CD14-positive monocyte (primary cell): ENCODE measurements at regions of chr4 and their contacts with region 1.

Region 1: GRCh38 chr4:139815778-139816601 is 150.4 kb downstream of the MGST2 start:
- DNase-seq: peak; percentile 75 to 90 (median 88)
- H3K4me3 ChIP-seq: peak overlapping the region; percentile 29 to 70 (median 44)
- H3K4me3 Mint-ChIP-seq: peak overlapping the region; percentile 84 to 93
- H3K27ac ChIP-seq: peak overlapping the region; percentile 26 to 68
- H3K27ac Mint-ChIP-seq: peak overlapping the region; percentile 75 to 97 (median 93)
- H3K4me1 ChIP-seq: peaks cover 44 to 48% of the 10 kb centered on the region in 2 donors
- H3K4me1 Mint-ChIP-seq: peaks cover 64% of the 10 kb centered on the region
- H3K27me3 ChIP-seq: no peaks in the 10 kb centered on the region
- H3K27me3 Mint-ChIP-seq: no peaks in the 10 kb centered on the region
- CTCF ChIP-seq: no peak

Region 2: GRCh38 chr4:139734875-139735380 is 81.1 kb before region 1 on chr4:
- intact Hi-C with region 1: loop called in 1 of 2 experiments (anchors 5 kb)
- DNase-seq: peak; percentile 74 to 97 (median 78)
- H3K4me3 ChIP-seq: peak overlapping the region; percentile 53 to 81 (median 73)
- H3K4me3 Mint-ChIP-seq: peak overlapping the region; percentile 85 to 92
- H3K27ac ChIP-seq: peak overlapping the region; percentile 34 to 79
- H3K27ac Mint-ChIP-seq: peak overlapping the region; percentile 48 to 94 (median 90)
- H3K4me1 ChIP-seq: peaks cover 40 to 57% of the 10 kb centered on the region in 2 donors
- H3K4me1 Mint-ChIP-seq: peaks cover 51% of the 10 kb centered on the region
- H3K27me3 ChIP-seq: no peaks in the 10 kb centered on the region
- H3K27me3 Mint-ChIP-seq: peaks cover 0 to 1% (median 1%) of the 10 kb centered on the region in 3 donors
- CTCF ChIP-seq: peak; percentile 95

Region 3: DNA sequence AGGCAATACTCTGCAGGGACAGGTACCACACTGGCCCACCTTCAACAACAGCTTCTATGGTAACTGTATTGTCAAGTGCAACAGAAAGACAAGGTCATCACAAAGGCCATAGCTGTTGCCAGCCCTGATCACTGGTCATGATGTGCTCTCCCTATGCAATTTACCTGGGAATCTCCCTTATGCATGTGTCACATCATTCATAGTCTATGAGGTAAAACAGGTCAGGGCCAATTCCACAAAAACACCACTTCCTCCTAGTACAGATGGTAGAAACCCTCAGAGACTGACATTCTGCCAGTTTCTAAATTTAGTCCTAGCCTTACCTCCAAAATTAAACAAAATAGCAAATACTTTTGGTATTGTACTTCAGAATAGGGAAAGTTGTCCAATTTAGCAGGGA is 17.5 kb before region 1 on chr4:
- intact Hi-C with region 1: no loop called
- DNase-seq: peak in 1 of 3 donors; percentile 68
- H3K4me3 ChIP-seq: no peak overlapping the region
- H3K4me3 Mint-ChIP-seq: no peak overlapping the region
- H3K27ac ChIP-seq: no peak overlapping the region
- H3K27ac Mint-ChIP-seq: no peak overlapping the region
- H3K4me1 ChIP-seq: no peaks in the 10 kb centered on the region
- H3K4me1 Mint-ChIP-seq: peaks cover 7% of the 10 kb centered on the region
- H3K27me3 ChIP-seq: no peaks in the 10 kb centered on the region
- H3K27me3 Mint-ChIP-seq: peaks cover 0 to 2% (median 0%) of the 10 kb centered on the region in 3 donors
- CTCF ChIP-seq: no peak

Region 4: DNA sequence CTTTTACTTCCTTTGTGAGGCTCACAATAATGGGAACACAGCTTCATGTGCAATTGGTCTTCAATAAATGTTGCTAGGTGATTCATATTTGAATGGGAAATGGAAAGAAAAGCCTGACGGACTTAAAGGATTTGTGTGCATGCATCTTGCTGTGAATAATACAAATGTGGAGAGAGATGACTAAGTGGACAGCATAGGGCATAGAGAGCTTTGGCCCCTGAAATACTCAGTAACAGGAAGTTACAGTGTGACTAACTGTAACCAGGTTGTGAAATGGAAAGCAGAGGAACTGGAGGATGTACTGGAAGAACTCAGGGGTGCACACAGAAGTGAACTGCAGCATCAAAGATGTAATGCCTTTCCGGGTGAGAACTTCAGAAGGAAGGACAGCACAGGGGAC is 56.3 kb after region 1 on chr4:
- intact Hi-C with region 1: loop called in 1 of 2 experiments (anchors 5 kb)
- DNase-seq: peak; percentile 91 to 98 (median 98)
- H3K4me3 ChIP-seq: peak overlapping the region in 1 of 3 experiments; percentile 11
- H3K4me3 Mint-ChIP-seq: peak overlapping the region; percentile 4 to 43
- H3K27ac ChIP-seq: peak overlapping the region; percentile 48 to 73
- H3K27ac Mint-ChIP-seq: peak overlapping the region; percentile 60 to 96 (median 84)
- H3K4me1 ChIP-seq: peaks cover 27 to 38% of the 10 kb centered on the region in 2 donors
- H3K4me1 Mint-ChIP-seq: peaks cover 36% of the 10 kb centered on the region
- H3K27me3 ChIP-seq: no peaks in the 10 kb centered on the region
- H3K27me3 Mint-ChIP-seq: peaks cover 1 to 2% (median 2%) of the 10 kb centered on the region in 3 donors
- CTCF ChIP-seq: no peak

Region 5: GRCh38 chr4:140028676-140029517 is 212.9 kb after region 1 on chr4:
- intact Hi-C with region 1: no loop called
- DNase-seq: no peak
- H3K4me3 ChIP-seq: no peak overlapping the region
- H3K4me3 Mint-ChIP-seq: no peak overlapping the region
- H3K27ac ChIP-seq: no peak overlapping the region
- H3K27ac Mint-ChIP-seq: no peak overlapping the region
- H3K4me1 ChIP-seq: peaks cover 16 to 26% of the 10 kb centered on the region in 2 donors
- H3K4me1 Mint-ChIP-seq: peaks cover 23% of the 10 kb centered on the region
- H3K27me3 ChIP-seq: no peaks in the 10 kb centered on the region
- H3K27me3 Mint-ChIP-seq: no peaks in the 10 kb centered on the region
- CTCF ChIP-seq: no peak